ENCODE measurements at regions of chr1 and their contacts with region 1.

Region 1: GRCh38 chr1:219066631-219067349 is 106.9 kb upstream of the LYPLAL1 start:
- DNase-seq: peak; percentile 2 to 78
- H3K4me3 ChIP-seq: no peak overlapping the region
- H3K27ac ChIP-seq: peak overlapping the region; percentile 30
- H3K4me1 ChIP-seq: peaks cover 5% of the 10 kb centered on the region; the same call in 1 of the 2 replicates
- H3K27me3 ChIP-seq: no peaks in the 10 kb centered on the region
- CTCF ChIP-seq: peak; percentile 84

Region 2: GRCh38 chr1:218339267-218339831 is 727.4 kb before region 1 on chr1:
- CTCF ChIA-PET with region 1: interaction called, 5 read pairs
- POLR2A ChIA-PET with region 1: no interaction called
- intact Hi-C with region 1: loop called (anchors 2 kb)
- DNase-seq: no peak
- H3K4me3 ChIP-seq: no peak overlapping the region
- H3K27ac ChIP-seq: no peak overlapping the region
- H3K4me1 ChIP-seq: peaks cover 17% of the 10 kb centered on the region
- H3K27me3 ChIP-seq: no peaks in the 10 kb centered on the region
- CTCF ChIP-seq: peak; percentile 88

Region 3: DNA sequence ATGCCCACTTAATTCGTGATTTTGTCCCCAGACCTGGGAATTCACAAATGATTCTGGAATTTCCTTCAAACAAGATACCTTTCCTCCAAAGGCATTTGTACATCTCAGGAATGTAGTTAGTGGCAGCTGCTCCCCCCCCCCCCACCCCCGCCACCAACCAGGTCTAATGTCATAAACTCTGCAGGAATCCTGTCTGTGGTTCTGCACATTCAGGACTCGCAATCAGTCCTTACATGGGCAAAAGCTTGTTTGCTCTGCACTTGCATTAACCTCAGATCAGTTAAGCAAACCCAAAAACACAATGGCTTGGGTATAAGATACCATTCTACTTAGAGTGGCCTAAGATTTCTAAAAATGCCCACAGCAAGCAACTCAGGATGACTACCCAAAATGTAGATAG is 577.8 kb before region 1 on chr1:
- CTCF ChIA-PET with region 1: no interaction called
- POLR2A ChIA-PET with region 1: interaction called, 3 read pairs
- intact Hi-C with region 1: loop called (anchors 2 kb)
- DNase-seq: peak; percentile 69 to 98
- H3K4me3 ChIP-seq: no peak overlapping the region
- H3K27ac ChIP-seq: peak overlapping the region; percentile 92
- H3K4me1 ChIP-seq: peaks cover 75% of the 10 kb centered on the region
- H3K27me3 ChIP-seq: no peaks in the 10 kb centered on the region
- CTCF ChIP-seq: no peak

Region 4: GRCh38 chr1:218592688-218593087 is 474.1 kb before region 1 on chr1:
- CTCF ChIA-PET with region 1: no interaction called
- POLR2A ChIA-PET with region 1: no interaction called
- intact Hi-C with region 1: loop called (anchors 1 kb)
- DNase-seq: peak; percentile 41 to 77
- H3K4me3 ChIP-seq: no peak overlapping the region
- H3K27ac ChIP-seq: peak overlapping the region; percentile 52
- H3K4me1 ChIP-seq: peaks cover 15% of the 10 kb centered on the region
- H3K27me3 ChIP-seq: no peaks in the 10 kb centered on the region
- CTCF ChIP-seq: no peak

Region 5: GRCh38 chr1:218660678-218661053 is 406.1 kb before region 1 on chr1:
- CTCF ChIA-PET with region 1: interaction called, 3 read pairs
- POLR2A ChIA-PET with region 1: interaction called, 3 read pairs
- intact Hi-C with region 1: loop called (anchors 2 kb)
- DNase-seq: peak; percentile 23 to 84
- H3K4me3 ChIP-seq: no peak overlapping the region
- H3K27ac ChIP-seq: peak overlapping the region; percentile 81
- H3K4me1 ChIP-seq: peaks cover 44% of the 10 kb centered on the region
- H3K27me3 ChIP-seq: no peaks in the 10 kb centered on the region
- CTCF ChIP-seq: no peak

Region 6: DNA sequence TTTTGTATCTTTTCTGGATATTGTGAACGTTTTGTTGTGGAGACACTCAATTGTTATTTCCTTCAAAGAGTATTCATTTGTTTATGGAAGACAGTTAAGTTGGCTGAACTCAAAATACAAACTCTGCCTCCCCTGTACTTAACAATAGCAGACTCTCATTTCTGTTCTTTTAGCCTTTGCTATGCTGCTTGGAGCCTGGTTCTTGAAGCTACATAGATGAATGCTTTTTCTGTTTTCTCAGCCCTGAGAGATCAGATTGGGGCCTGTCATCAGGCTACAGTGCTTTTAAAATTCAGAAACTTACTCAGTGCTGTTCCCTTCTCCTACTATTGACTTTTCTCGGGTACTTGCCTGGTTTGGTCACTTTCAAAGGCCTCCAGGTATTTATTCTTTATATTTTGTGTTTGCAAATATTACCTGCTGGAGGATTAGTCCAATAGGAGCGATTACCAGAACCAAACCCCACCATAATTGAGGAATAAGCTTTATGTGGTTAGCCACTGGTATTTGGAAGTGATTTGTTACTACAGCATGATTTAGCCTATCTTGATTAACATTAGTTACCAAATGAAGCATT is 108.7 kb before region 1 on chr1:
- CTCF ChIA-PET with region 1: no interaction called
- POLR2A ChIA-PET with region 1: no interaction called
- intact Hi-C with region 1: no loop called
- DNase-seq: no peak
- H3K4me3 ChIP-seq: no peak overlapping the region
- H3K27ac ChIP-seq: no peak overlapping the region
- H3K4me1 ChIP-seq: no peaks in the 10 kb centered on the region
- H3K27me3 ChIP-seq: no peaks in the 10 kb centered on the region
- CTCF ChIP-seq: no peak

Region 7: GRCh38 chr1:219385786-219386427 is 319.1 kb after region 1 on chr1:
- CTCF ChIA-PET with region 1: no interaction called
- POLR2A ChIA-PET with region 1: no interaction called
- intact Hi-C with region 1: loop called (anchors 5 kb)
- DNase-seq: peak; percentile 43 to 63
- H3K4me3 ChIP-seq: no peak overlapping the region
- H3K27ac ChIP-seq: no peak overlapping the region
- H3K4me1 ChIP-seq: peaks cover 6% of the 10 kb centered on the region; the same call in 1 of the 2 replicates
- H3K27me3 ChIP-seq: no peaks in the 10 kb centered on the region
- CTCF ChIP-seq: peak; percentile 79

Region 8: GRCh38 chr1:219566951-219567947 is 500.5 kb after region 1 on chr1:
- CTCF ChIA-PET with region 1: no interaction called
- POLR2A ChIA-PET with region 1: interaction called, 5 read pairs
- intact Hi-C with region 1: loop called (anchors 5 kb)
- DNase-seq: no peak
- H3K4me3 ChIP-seq: no peak overlapping the region
- H3K27ac ChIP-seq: no peak overlapping the region
- H3K4me1 ChIP-seq: peaks cover 19% of the 10 kb centered on the region
- H3K27me3 ChIP-seq: no peaks in the 10 kb centered on the region
- CTCF ChIP-seq: peak; percentile 65